CD8-positive, alpha-beta T cell (primary cell): ENCODE measurements at regions of chr6 and their contacts with region 1.

Region 1: DNA sequence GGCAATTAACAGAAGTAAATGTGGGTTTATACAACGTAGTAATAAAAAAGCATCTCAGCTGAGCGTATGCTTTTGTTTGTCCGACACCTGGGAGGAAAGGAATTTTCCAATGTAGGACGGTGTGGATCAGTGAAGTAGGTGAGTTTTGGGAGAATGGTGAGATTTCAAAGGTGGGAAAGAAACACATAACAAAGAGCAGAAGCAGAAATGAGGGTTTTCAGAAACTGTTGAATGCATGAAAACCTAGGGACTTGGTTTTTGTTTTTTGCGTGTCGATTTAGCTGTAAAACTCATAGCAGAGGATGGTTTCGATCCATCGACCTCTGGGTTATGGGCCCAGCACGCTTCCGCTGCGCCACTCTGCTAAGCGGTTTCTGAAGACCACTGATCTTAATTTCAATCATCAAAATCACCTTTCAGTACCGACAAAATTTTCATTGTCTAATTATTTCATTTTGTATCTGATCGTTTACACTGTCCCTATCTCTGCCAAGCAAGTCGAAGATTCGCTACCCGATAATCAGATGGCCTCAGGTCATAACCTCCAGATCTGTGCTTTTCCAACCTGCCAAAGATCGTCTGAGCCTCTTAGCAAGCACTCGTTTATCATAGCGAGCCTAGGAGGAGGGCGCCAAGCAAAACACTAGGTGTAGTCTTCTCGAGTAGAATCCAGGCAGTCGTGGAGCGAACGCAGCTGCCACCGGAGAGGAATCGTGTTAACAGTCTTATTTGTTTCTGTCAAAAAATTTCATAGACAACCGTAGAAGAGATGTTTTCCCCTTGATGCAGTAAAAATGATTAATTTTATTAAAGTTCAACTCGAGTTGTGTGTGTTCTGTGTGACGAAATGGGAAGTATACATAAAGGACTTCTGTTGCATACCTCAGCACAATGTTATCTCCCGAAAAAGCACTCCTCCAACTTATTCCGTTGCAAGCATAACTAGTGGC is 20.9 kb upstream of the POM121L2 start:
- DNase-seq: peak in 8 of 9 experiments; percentile 12 to 78 (median 60)
- ATAC-seq: peak; percentile 86
- H3K4me3 ChIP-seq: peak overlapping the region; percentile 53
- H3K4me3 Mint-ChIP-seq: peak overlapping the region; percentile 87
- H3K27ac ChIP-seq: no peak overlapping the region
- H3K27ac Mint-ChIP-seq: peak overlapping the region; percentile 82
- H3K4me1 ChIP-seq: no peaks in the 10 kb centered on the region
- H3K4me1 Mint-ChIP-seq: peaks cover 15% of the 10 kb centered on the region
- H3K27me3 ChIP-seq: peaks cover 0 to 4% of the 10 kb centered on the region in 2 experiments
- H3K27me3 Mint-ChIP-seq: peaks cover 21% of the 10 kb centered on the region
- CTCF ChIP-seq: no peak

Region 2: GRCh38 chr6:27234576-27234975 is 98.4 kb before region 1 on chr6:
- CTCF ChIA-PET with region 1: no interaction called
- POLR2A ChIA-PET with region 1: no interaction called
- intact Hi-C with region 1: no loop called
- DNase-seq: no peak
- ATAC-seq: no peak
- H3K4me3 ChIP-seq: no peak overlapping the region
- H3K4me3 Mint-ChIP-seq: no peak overlapping the region
- H3K27ac ChIP-seq: no peak overlapping the region
- H3K27ac Mint-ChIP-seq: no peak overlapping the region
- H3K4me1 ChIP-seq: no peaks in the 10 kb centered on the region
- H3K4me1 Mint-ChIP-seq: peaks cover 10% of the 10 kb centered on the region
- H3K27me3 ChIP-seq: peaks cover 38 to 39% of the 10 kb centered on the region in 2 experiments
- H3K27me3 Mint-ChIP-seq: peaks cover 77% of the 10 kb centered on the region
- CTCF ChIP-seq: no peak

Region 3: DNA sequence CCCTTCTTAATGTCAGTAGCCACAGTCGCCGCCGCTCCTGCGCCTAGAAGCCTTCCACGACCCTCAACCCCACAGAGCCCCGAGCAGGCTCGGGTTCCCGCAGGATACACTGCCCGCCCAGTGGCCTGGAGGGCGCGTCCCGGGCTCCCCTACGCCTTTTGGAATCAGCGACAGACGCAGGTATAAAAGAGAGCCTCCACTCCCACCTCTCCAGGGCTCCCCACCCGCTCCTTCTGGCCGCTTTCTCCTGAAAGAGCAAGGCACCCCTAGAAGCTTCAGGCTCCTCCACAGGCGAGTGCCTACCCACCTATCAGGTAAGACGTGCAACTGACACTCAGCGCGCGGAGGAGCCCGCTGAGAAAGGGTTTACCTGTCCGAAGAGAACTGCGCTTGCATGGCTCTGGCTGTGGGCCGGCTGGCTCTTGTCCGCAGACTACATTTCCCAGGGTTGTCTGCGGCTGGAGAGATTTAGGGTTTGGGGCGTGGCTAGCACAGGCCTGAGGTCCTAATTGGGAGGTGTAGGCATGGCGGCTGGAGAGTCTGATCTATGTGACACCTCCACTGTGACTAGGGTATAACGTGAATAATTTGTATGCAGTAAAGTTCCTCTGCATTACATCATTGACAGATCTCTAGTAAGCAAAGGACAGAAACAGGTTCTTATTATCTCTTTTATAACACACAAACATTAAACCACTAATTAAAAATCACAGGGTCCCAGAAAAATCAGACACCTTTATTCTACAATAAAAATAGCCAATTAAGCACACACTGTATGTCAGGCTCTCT is 42.1 kb after region 1 on chr6:
- CTCF ChIA-PET with region 1: no interaction called
- POLR2A ChIA-PET with region 1: no interaction called
- intact Hi-C with region 1: loop called in 1 of 2 experiments (anchors 2 kb)
- DNase-seq: peak; percentile 43 to 85 (median 69)
- ATAC-seq: peak; percentile 98
- H3K4me3 ChIP-seq: peak overlapping the region; percentile 58 to 68
- H3K4me3 Mint-ChIP-seq: peak overlapping the region; percentile 96
- H3K27ac ChIP-seq: peak overlapping the region; percentile 13 to 48
- H3K27ac Mint-ChIP-seq: peak overlapping the region; percentile 92
- H3K4me1 ChIP-seq: peaks cover 12% of the 10 kb centered on the region
- H3K4me1 Mint-ChIP-seq: peaks cover 21% of the 10 kb centered on the region
- H3K27me3 ChIP-seq: no peaks in the 10 kb centered on the region
- H3K27me3 Mint-ChIP-seq: peaks cover 8% of the 10 kb centered on the region
- CTCF ChIP-seq: no peak

Region 4: GRCh38 chr6:27388293-27389197 is 55.6 kb after region 1 on chr6 and contains the start of gene ZNF391:
- CTCF ChIA-PET with region 1: no interaction called
- POLR2A ChIA-PET with region 1: no interaction called
- intact Hi-C with region 1: loop called in 1 of 2 experiments (anchors 5 kb)
- DNase-seq: peak; percentile 41 to 86 (median 67)
- ATAC-seq: peak; percentile 90
- H3K4me3 ChIP-seq: peak within 1 kb of the TSS; percentile 66 to 72
- H3K4me3 Mint-ChIP-seq: peak within 1 kb of the TSS; percentile 98
- H3K27ac ChIP-seq: peak within 1 kb of the TSS; percentile 45 to 55
- H3K27ac Mint-ChIP-seq: peak within 1 kb of the TSS; percentile 94
- H3K4me1 ChIP-seq: peaks cover 9% of the 10 kb centered on the region
- H3K4me1 Mint-ChIP-seq: peaks cover 15% of the 10 kb centered on the region
- H3K27me3 ChIP-seq: no peaks in the 10 kb centered on the region
- H3K27me3 Mint-ChIP-seq: no peaks in the 10 kb centered on the region
- CTCF ChIP-seq: no peak
- total RNA-seq, gene ZNF391: 0.72 to 1.1 TPM

Region 5: GRCh38 chr6:27503436-27504030 is 170.6 kb after region 1 on chr6:
- CTCF ChIA-PET with region 1: no interaction called
- POLR2A ChIA-PET with region 1: no interaction called
- intact Hi-C with region 1: loop called in 1 of 2 experiments (anchors 1 kb)
- DNase-seq: peak; percentile 58 to 90 (median 79)
- ATAC-seq: peak; percentile 62
- H3K4me3 ChIP-seq: peak overlapping the region; percentile 61 to 70
- H3K4me3 Mint-ChIP-seq: peak overlapping the region; percentile 94
- H3K27ac ChIP-seq: peak overlapping the region; percentile 34 to 46
- H3K27ac Mint-ChIP-seq: peak overlapping the region; percentile 90
- H3K4me1 ChIP-seq: peaks cover 11% of the 10 kb centered on the region
- H3K4me1 Mint-ChIP-seq: peaks cover 38% of the 10 kb centered on the region
- H3K27me3 ChIP-seq: peaks cover 0 to 7% of the 10 kb centered on the region in 2 experiments
- H3K27me3 Mint-ChIP-seq: peaks cover 4% of the 10 kb centered on the region
- CTCF ChIP-seq: no peak